Pancreas (tissue), 10 donors: ENCODE measurements at regions of chr5 and their contacts with region 1.

Region 1: DNA sequence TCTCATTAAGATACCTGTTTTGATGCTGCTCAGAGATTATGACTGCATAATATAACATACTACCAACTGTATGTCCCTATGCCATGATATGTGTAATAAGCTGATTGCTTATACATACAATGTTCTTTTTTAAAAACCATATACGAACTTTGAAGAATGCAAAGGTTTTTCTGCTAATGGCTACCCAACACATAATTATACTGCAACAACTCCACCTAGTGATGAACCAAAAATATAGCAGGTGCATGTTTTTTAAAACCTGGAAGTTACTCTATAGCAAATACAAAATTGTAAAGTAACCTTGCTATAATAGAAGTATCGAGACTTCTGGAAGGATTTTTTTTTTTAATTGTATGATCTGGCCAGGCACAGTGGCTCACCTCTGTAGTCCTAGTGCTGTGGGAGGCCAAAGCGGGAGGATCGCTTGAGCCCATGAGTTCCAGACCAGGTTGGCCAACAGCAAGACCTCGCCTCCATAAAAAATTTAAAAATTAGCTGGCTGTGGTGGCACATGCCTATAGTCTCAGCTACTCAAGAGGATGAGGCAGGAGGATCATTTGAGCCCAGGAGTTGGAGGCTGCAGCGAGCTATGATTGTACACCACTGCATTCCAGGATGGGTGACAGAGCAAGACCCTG is 49.1 kb downstream of the HOMER1 start:
- DNase-seq: no peak
- ATAC-seq: peak; percentile 70 to 86 (median 81)
- H3K4me3 ChIP-seq: no peak overlapping the region
- H3K27ac ChIP-seq: no peak overlapping the region
- H3K4me1 ChIP-seq: no peaks in the 10 kb centered on the region
- H3K27me3 ChIP-seq: no peaks in the 10 kb centered on the region
- CTCF ChIP-seq: peak in 3 of 4 donors; percentile 16 to 53 (median 35)

Region 2: GRCh38 chr5:79133657-79134451 is 331.0 kb before region 1 on chr5:
- intact Hi-C with region 1: loop called in 1 of 3 experiments (anchors 10 kb)
- DNase-seq: peak in 5 of 6 donors; percentile 43 to 74 (median 56)
- ATAC-seq: peak; percentile 91 to 96 (median 95)
- H3K4me3 ChIP-seq: peak overlapping the region in 1 of 4 donors; percentile 35
- H3K27ac ChIP-seq: peak overlapping the region in 2 of 4 donors; percentile 31 to 52
- H3K4me1 ChIP-seq: peaks cover 0 to 7% (median 3%) of the 10 kb centered on the region in 3 donors
- H3K27me3 ChIP-seq: no peaks in the 10 kb centered on the region
- CTCF ChIP-seq: peak; percentile 48 to 69 (median 52)